Heart right ventricle (tissue), 16 donors: ENCODE measurements at regions of chr12 and their contacts with region 1.

Region 1: GRCh38 chr12:642633-643474 is 20.4 kb downstream of the NINJ2 start:
- DNase-seq: peak; percentile 77 to 82
- ATAC-seq: peak; percentile 60 to 82 (median 68)
- H3K4me3 ChIP-seq: peak overlapping the region; percentile 45 to 76 (median 68)
- H3K27ac ChIP-seq: peak overlapping the region; percentile 98 to 100 (median 99)
- H3K4me1 ChIP-seq: peaks cover 23 to 88% (median 60%) of the 10 kb centered on the region in 9 donors
- H3K27me3 ChIP-seq: no peaks in the 10 kb centered on the region
- CTCF ChIP-seq: peak in 8 of 9 donors; percentile 5 to 49 (median 36)

Region 2: DNA sequence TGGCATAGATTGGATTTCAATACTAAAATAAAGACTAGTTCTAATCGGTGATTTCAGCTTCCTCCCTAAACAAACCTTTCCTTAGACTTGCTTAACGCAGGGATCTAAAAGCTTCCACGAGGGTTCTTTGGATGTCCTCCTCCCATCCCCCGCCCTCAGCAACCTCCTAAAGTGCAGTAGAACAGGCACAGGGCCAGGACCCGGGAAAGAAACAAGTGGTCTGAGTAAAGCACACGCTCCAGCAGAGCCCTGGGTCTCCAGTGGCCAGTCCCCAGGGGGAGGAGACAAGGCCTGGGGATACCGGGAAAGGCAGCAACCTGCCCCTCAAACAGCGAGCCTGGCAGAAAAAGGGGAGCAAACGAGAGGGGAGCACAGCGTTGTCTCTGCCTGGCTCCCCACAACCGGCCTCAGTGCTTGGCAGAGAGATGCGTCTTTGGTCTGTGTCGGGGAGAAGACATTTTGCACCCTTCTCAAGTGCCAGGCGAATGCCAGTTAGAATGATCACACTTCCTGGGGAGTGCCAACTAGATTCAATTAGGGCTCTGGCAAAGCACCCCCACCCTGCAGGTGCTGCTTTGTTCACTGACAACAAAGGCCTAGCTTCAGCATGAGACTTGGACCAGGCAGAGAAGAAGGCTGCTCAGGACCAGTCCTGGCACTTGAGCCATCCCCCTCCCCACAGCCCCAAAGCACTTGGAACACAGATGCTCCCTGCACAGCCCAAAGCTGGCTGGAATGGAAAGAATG is 411.8 kb before region 1 on chr12:
- intact Hi-C with region 1: no loop called
- DNase-seq: no peak
- ATAC-seq: no peak
- H3K4me3 ChIP-seq: no peak overlapping the region
- H3K27ac ChIP-seq: no peak overlapping the region
- H3K4me1 ChIP-seq: no peaks in the 10 kb centered on the region
- H3K27me3 ChIP-seq: no peaks in the 10 kb centered on the region
- CTCF ChIP-seq: no peak

Region 3: DNA sequence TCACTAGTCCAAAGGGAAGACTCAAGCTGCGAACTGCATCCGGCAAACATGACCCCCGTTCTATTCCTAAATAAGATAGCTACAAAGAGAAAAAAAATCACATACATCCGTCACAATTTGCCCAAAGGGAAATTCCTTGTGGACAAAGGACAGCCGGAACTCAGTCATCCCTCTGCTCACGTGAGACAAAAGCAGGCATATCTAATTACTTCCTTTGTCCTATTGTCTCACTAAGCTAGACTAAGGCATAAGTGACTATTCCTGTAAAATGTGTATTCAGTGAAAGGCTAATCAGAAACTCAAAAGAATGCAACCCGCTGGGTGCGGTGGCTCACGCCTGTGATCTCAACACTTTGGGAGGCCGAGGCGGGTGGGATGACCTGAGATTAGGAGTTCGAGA is 47.6 kb after region 1 on chr12:
- intact Hi-C with region 1: loop called in 1 of 10 experiments (anchors 5 kb)
- DNase-seq: peak in 1 of 2 donors; percentile 19
- ATAC-seq: peak in 7 of 8 donors; percentile 55 to 82 (median 61)
- H3K4me3 ChIP-seq: peak overlapping the region in 2 of 10 donors; percentile 6 to 33
- H3K27ac ChIP-seq: peak overlapping the region in 9 of 10 donors; percentile 39 to 77 (median 62)
- H3K4me1 ChIP-seq: peaks cover 0 to 17% (median 3%) of the 10 kb centered on the region in 9 donors
- H3K27me3 ChIP-seq: no peaks in the 10 kb centered on the region
- CTCF ChIP-seq: no peak

Region 4: DNA sequence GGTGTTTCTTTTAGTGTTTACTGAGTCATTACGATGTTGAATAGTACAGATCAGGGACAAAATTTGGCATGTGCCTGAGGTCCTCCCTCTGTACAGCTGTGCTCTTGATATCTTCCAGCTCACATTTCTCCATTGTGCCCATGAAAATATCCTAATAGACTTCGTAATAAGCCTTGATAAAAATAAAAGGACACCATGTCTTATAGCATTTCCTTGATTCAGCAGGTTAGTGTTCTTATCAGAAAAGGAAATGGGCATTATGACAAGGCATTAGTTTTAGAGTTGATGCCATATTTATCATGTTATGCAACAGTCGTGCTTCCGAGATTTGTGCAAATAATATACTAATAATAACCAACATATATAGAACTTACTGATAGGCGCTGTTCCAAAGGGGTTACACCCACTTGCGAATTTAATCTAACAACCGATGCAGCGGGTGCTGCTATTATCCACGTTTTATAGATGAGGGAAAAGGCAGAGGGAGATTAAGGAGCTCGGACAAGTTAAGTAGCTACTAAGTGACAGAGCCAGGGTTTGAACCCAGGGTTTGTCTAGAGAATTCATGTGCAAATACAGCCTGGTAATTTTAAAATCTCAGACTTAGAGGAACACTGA is 94.4 kb after region 1 on chr12:
- intact Hi-C with region 1: loop called in 1 of 10 experiments (anchors 5 kb)
- DNase-seq: no peak
- ATAC-seq: peak in 4 of 8 donors; percentile 34 to 91 (median 82)
- H3K4me3 ChIP-seq: no peak overlapping the region
- H3K27ac ChIP-seq: peak overlapping the region in 5 of 10 donors; percentile 19 to 79 (median 36)
- H3K4me1 ChIP-seq: peaks cover 0 to 29% (median 16%) of the 10 kb centered on the region in 9 donors
- H3K27me3 ChIP-seq: no peaks in the 10 kb centered on the region
- CTCF ChIP-seq: no peak

Region 5: GRCh38 chr12:810671-811415 is 168.0 kb after region 1 on chr12:
- intact Hi-C with region 1: loop called in 4 of 10 experiments (anchors 5 to 10 kb)
- DNase-seq: no peak
- ATAC-seq: peak in 1 of 8 donors; percentile 34
- H3K4me3 ChIP-seq: no peak overlapping the region
- H3K27ac ChIP-seq: no peak overlapping the region
- H3K4me1 ChIP-seq: peaks cover 0 to 77% (median 54%) of the 10 kb centered on the region in 9 donors
- H3K27me3 ChIP-seq: no peaks in the 10 kb centered on the region
- CTCF ChIP-seq: no peak